A673 (cell line): ENCODE measurements at regions of chr18 and their contacts with region 1.

Region 1: GRCh38 chr18:67199993-67200617 is 316.4 kb downstream of the DSEL start:
- DNase-seq: peak; percentile 73
- H3K4me3 ChIP-seq: no peak overlapping the region
- H3K27ac ChIP-seq: no peak overlapping the region
- H3K4me1 ChIP-seq: peaks cover 5% of the 10 kb centered on the region
- H3K27me3 ChIP-seq: no peaks in the 10 kb centered on the region
- CTCF ChIP-seq: peak; percentile 71

Region 2: GRCh38 chr18:65938592-65939372 is 1261.3 kb before region 1 on chr18:
- CTCF ChIA-PET with region 1: no interaction called
- POLR2A ChIA-PET with region 1: no interaction called
- intact Hi-C with region 1: loop called (anchors 10 kb)
- DNase-seq: peak; percentile 91
- H3K4me3 ChIP-seq: no peak overlapping the region
- H3K27ac ChIP-seq: peak overlapping the region; percentile 2
- H3K4me1 ChIP-seq: peaks cover 18% of the 10 kb centered on the region
- H3K27me3 ChIP-seq: no peaks in the 10 kb centered on the region
- CTCF ChIP-seq: peak; percentile 79

Region 3: GRCh38 chr18:67104700-67105284 is 95.3 kb before region 1 on chr18:
- CTCF ChIA-PET with region 1: interaction called, 5 read pairs
- POLR2A ChIA-PET with region 1: no interaction called
- intact Hi-C with region 1: loop called (anchors 1 kb)
- DNase-seq: peak; percentile 79
- H3K4me3 ChIP-seq: no peak overlapping the region
- H3K27ac ChIP-seq: no peak overlapping the region
- H3K4me1 ChIP-seq: no peaks in the 10 kb centered on the region
- H3K27me3 ChIP-seq: no peaks in the 10 kb centered on the region
- CTCF ChIP-seq: peak; percentile 90

Region 4: GRCh38 chr18:67243799-67244587 is 43.9 kb after region 1 on chr18:
- CTCF ChIA-PET with region 1: no interaction called
- POLR2A ChIA-PET with region 1: no interaction called
- intact Hi-C with region 1: no loop called
- DNase-seq: peak; percentile 28
- H3K4me3 ChIP-seq: peak overlapping the region; percentile 4
- H3K27ac ChIP-seq: no peak overlapping the region
- H3K4me1 ChIP-seq: peaks cover 14% of the 10 kb centered on the region
- H3K27me3 ChIP-seq: no peaks in the 10 kb centered on the region
- CTCF ChIP-seq: no peak

Region 5: DNA sequence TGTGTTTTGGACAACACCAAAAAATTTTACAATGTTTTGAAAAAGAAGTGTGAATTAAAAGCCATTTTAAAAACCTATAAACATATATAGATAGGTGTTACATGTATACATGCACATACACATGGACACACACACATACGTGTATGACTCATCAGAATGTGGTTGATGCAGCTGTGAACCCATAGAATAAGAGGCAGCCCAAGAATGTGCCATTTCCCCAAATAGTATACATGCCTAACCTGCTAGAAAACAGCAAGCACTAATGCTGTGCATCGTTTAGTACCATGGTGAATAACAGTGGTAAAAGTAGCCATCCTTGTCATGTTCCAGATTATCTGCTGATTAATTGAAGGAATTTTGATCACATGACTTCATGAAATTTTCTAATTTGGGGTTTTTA is 167.4 kb after region 1 on chr18:
- CTCF ChIA-PET with region 1: no interaction called
- POLR2A ChIA-PET with region 1: no interaction called
- intact Hi-C with region 1: no loop called
- DNase-seq: no peak
- H3K4me3 ChIP-seq: no peak overlapping the region
- H3K27ac ChIP-seq: no peak overlapping the region
- H3K4me1 ChIP-seq: no peaks in the 10 kb centered on the region
- H3K27me3 ChIP-seq: no peaks in the 10 kb centered on the region
- CTCF ChIP-seq: no peak